Heart right ventricle (tissue), 16 donors: ENCODE measurements at regions of chr10 and their contacts with region 1.

Region 1: GRCh38 chr10:51010977-51011376 is 63.3 kb upstream of the PRKG1 start:
- DNase-seq: no peak
- ATAC-seq: peak in 3 of 8 donors; percentile 27 to 54 (median 46)
- H3K4me3 ChIP-seq: no peak overlapping the region
- H3K27ac ChIP-seq: no peak overlapping the region
- H3K4me1 ChIP-seq: peaks cover 0 to 25% (median 6%) of the 10 kb centered on the region in 9 donors
- H3K27me3 ChIP-seq: no peaks in the 10 kb centered on the region
- CTCF ChIP-seq: peak; percentile 59 to 81 (median 73)

Region 2: GRCh38 chr10:51047857-51048256 is 36.9 kb after region 1 on chr10:
- intact Hi-C with region 1: loop called in 6 of 10 experiments (anchors 5 kb)
- DNase-seq: no peak
- ATAC-seq: peak in 7 of 8 donors; percentile 74 to 83 (median 79)
- H3K4me3 ChIP-seq: no peak overlapping the region
- H3K27ac ChIP-seq: peak overlapping the region in 1 of 10 donors; percentile 11
- H3K4me1 ChIP-seq: peaks cover 0 to 44% (median 17%) of the 10 kb centered on the region in 9 donors
- H3K27me3 ChIP-seq: no peaks in the 10 kb centered on the region
- CTCF ChIP-seq: peak in 8 of 9 donors; percentile 17 to 64 (median 42)

Region 3: GRCh38 chr10:51063659-51064535 is 52.9 kb after region 1 on chr10:
- intact Hi-C with region 1: no loop called
- DNase-seq: no peak
- ATAC-seq: peak in 5 of 8 donors; percentile 47 to 69 (median 55)
- H3K4me3 ChIP-seq: no peak overlapping the region
- H3K27ac ChIP-seq: no peak overlapping the region
- H3K4me1 ChIP-seq: peaks cover 0 to 19% (median 3%) of the 10 kb centered on the region in 9 donors
- H3K27me3 ChIP-seq: no peaks in the 10 kb centered on the region
- CTCF ChIP-seq: peak in 8 of 9 donors; percentile 41 to 74 (median 66)